ENCODE measurements at regions of chr7 and their contacts with region 1.

Region 1: GRCh38 chr7:100705753-100706671 is at the start of gene POP7:
- DNase-seq: peak; percentile 99
- total RNA-seq, gene POP7: 25.1 TPM

Region 2: GRCh38 chr7:100673300-100673941 is 32.6 kb before region 1 on chr7 and contains the start of gene GNB2:
- intact Hi-C with region 1: loop called (anchors 5 kb)
- DNase-seq: peak; percentile 100
- total RNA-seq, gene GNB2: 123 TPM

Region 3: GRCh38 chr7:100745184-100745583 is 39.2 kb after region 1 on chr7:
- intact Hi-C with region 1: no loop called
- DNase-seq: no peak

Region 4: DNA sequence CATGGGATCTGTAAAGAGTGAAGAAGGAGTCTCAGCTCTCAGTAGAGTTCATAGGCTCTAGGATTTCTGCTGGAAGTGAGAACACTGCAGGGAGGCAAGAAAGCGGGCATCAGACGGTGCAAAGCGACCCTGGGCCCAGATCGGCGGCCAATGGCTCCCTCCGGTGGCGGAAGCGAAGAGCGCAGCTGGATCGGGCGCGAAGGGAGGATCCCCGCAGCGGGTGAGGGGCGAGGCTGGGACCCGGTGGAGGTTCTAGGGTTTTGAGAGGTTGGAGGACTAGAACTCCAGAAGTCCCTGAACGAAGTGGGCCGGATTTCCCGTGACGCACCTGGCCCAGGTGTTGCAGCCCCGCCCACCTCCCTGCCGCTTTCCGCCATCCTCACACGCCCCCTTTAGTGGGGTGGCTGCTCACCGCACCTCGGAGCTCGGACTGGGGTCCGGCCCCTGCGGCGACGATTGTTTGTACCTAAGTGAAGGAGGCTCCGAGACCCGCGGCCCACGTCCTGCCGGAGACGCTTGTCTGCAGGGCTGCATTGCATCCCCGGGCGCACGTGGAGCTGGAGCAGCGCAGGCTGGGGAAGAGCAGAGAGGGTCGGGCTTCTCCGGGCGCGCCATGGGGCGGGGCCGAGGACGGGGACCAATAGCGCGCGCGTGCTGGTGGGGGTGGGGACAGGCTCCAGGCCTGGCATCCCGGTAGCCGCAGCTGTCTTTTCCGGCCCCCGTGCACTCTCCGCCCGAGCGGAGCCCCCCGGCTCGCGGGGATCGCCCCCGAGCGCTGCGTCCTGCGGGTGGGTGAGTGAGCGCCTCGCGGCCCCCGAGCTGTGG is 146.2 kb after region 1 on chr7 and contains the start of gene SLC12A9:
- intact Hi-C with region 1: loop called (anchors 1 kb)
- DNase-seq: peak; percentile 94
- total RNA-seq, gene SLC12A9: 6.9 TPM

Region 5: GRCh38 chr7:100874577-100875355 is 168.8 kb after region 1 on chr7 and contains the start of gene SRRT:
- intact Hi-C with region 1: loop called (anchors 5 kb)
- DNase-seq: peak; percentile 99
- total RNA-seq, gene SRRT: 62.9 TPM